ENCODE measurements at regions of chr2 and their contacts with region 1.

Region 1: DNA sequence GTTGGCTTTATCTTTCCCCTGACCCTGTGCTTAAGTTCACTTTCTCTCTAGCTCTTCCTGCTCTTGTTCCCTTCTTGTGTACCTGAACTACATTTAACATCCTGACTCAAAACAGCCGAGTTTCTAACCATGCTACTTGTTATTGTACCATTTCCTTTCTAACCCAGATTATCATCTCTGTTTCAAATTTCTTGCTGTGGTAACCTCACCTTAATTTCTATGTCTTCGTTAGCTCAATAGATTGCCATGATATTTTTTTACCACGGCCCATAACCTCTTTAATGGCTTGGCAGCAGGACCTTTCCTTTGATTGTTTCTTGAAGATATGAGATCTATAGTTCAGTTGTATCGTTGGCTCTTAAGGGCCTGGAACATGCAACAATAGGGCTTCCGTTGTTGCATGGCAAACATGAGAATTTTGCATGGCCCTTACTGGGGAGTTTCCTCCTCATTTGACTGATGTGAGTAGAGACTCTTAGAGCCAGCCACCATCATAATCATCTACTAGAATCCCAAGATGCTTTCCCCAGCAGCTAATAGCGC is 11.1 kb downstream of the CFAP36 start:
- DNase-seq: peak in 8 of 35 experiments; percentile 2 to 39 (median 11)
- ATAC-seq: peak; percentile 76 to 86 (median 85)
- H3K4me3 ChIP-seq: no peak overlapping the region
- H3K4me3 Mint-ChIP-seq: peak overlapping the region; percentile 3 to 44 (median 9)
- H3K27ac ChIP-seq: peak overlapping the region; percentile 67
- H3K27ac Mint-ChIP-seq: peak overlapping the region; percentile 89 to 90
- H3K4me1 ChIP-seq: peaks cover 7 to 9% of the 10 kb centered on the region in 2 experiments
- H3K4me1 Mint-ChIP-seq: peaks cover 21 to 23% (median 21%) of the 10 kb centered on the region in 3 donors
- H3K27me3 ChIP-seq: no peaks in the 10 kb centered on the region
- H3K27me3 Mint-ChIP-seq: no peaks in the 10 kb centered on the region

Region 2: GRCh38 chr2:55511508-55512124 is 19.0 kb before region 1 on chr2:
- CTCF ChIA-PET with region 1: interaction called in 1 of 2 experiments, 3 read pairs
- POLR2A ChIA-PET with region 1: interaction called in 1 of 2 experiments, 12 read pairs
- DNase-seq: no peak
- ATAC-seq: no peak
- H3K4me3 ChIP-seq: no peak overlapping the region
- H3K4me3 Mint-ChIP-seq: no peak overlapping the region
- H3K27ac ChIP-seq: no peak overlapping the region
- H3K27ac Mint-ChIP-seq: no peak overlapping the region
- H3K4me1 ChIP-seq: no peaks in the 10 kb centered on the region
- H3K4me1 Mint-ChIP-seq: no peaks in the 10 kb centered on the region
- H3K27me3 ChIP-seq: peaks cover 0 to 3% of the 10 kb centered on the region in 2 experiments
- H3K27me3 Mint-ChIP-seq: peaks cover 0 to 3% of the 10 kb centered on the region in 2 donors

Region 3: DNA sequence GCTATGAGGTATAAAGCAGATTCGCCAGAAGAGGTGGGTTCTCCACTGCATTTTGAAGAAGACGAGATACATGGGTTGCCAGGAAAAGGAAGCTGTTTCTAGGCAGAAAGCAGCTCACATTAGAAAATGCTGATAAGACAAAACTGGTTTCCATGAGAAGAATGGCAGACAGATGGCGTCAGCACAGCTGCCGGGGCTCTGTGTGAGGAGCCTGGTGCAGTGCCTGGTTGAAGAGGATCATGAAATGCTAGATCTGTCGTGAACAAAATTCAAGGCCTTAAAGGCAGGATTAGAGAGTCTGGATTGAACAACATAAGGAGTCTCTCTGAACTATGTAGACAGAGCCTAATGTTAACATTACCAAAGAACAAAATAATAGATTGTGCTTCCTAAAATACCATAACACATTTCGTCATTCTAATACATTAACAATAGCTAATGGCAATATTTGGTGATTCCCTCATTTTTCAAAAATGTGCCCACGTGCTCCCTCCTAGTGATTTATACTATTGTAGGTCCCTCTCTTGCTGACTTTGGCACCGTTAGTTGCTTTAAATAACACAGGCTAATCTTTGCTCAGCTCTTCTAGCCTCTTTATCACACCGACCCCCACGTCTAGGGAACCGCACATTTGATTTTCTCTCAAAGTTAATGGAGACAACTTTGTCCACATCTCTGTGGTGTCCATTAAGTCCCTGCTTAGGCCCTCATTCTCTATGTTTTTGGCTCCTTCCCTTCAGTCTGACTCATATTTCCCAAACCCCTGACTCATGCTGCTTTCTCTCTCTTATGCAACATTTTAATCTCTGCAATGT is 354.7 kb after region 1 on chr2:
- CTCF ChIA-PET with region 1: no interaction called
- POLR2A ChIA-PET with region 1: no interaction called
- DNase-seq: no peak
- ATAC-seq: no peak
- H3K4me3 ChIP-seq: no peak overlapping the region
- H3K4me3 Mint-ChIP-seq: no peak overlapping the region
- H3K27ac ChIP-seq: no peak overlapping the region
- H3K27ac Mint-ChIP-seq: no peak overlapping the region
- H3K4me1 ChIP-seq: no peaks in the 10 kb centered on the region
- H3K4me1 Mint-ChIP-seq: no peaks in the 10 kb centered on the region
- H3K27me3 ChIP-seq: no peaks in the 10 kb centered on the region
- H3K27me3 Mint-ChIP-seq: no peaks in the 10 kb centered on the region